H1 (cell line): ENCODE measurements at regions of chr18 and their contacts with region 1.

Region 1: DNA sequence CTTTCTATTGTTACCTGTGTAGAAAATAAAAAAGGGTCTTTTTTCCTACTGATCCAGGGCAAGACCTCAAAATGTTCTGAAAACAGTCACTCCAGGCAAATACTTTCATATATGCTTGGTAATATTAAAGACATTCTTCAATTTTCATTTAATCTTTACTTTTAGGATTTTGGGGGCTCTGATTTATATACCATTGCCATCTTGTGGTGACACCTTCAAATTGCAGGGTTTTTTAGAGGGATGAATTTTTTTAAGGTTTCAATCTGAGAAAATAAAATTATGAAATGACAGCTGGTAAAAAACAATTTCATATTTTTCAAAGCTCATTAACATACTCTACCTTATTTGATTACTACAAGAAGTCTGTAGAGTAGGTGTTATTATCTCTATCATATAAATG is 26.8 kb downstream of the MAPK4 start:
- DNase-seq: no peak
- H3K4me3 ChIP-seq: no peak overlapping the region
- H3K27ac ChIP-seq: no peak overlapping the region
- H3K4me1 ChIP-seq: no peaks in the 10 kb centered on the region
- H3K27me3 ChIP-seq: no peaks in the 10 kb centered on the region; a peak in 2 of 7 replicates
- CTCF ChIP-seq: peak in 2 of 3 experiments; percentile 31 to 47; a peak in 2 of 4 replicates
- EP300 ChIP-seq: no peak
- POLR2A ChIP-seq: no peak
- RAD21 ChIP-seq: peak in 1 of 2 experiments; percentile 57; a peak in 3 of 4 replicates

Region 2: DNA sequence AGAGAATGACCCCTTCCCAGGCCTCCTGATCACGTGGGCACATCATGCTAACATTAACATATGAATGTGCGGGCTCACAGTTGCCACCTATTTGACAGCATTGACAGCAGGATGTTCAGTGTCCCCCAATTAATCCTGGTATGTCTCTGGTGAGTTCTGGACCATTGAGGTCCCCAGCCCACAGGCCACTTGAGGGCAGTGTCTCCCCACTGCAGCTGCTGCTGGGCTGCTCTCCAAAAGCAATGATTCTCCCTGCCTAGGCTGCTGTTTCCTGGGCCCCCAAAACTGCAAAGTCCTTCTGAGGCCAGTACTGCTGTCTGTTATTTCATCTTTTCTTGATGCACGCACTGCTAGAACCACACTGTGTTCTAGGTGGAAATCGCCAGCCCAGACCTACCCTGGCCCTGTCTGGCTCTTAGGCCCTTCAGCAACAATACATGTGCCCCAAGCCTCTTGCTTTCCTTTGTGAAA is 79.6 kb before region 1 on chr18:
- CTCF ChIA-PET with region 1: interaction called, 50 read pairs
- POLR2A ChIA-PET with region 1: no interaction called
- DNase-seq: peak; percentile 29 to 77
- H3K4me3 ChIP-seq: no peak overlapping the region
- H3K27ac ChIP-seq: no peak overlapping the region
- H3K4me1 ChIP-seq: peaks cover 0 to 8% (median 0%) of the 10 kb centered on the region in 4 experiments; a peak in 2 of 7 replicates
- H3K27me3 ChIP-seq: no peaks in the 10 kb centered on the region
- CTCF ChIP-seq: peak; percentile 93 to 96 (median 94)
- EP300 ChIP-seq: no peak
- POLR2A ChIP-seq: no peak
- RAD21 ChIP-seq: peak; percentile 99

Region 3: GRCh38 chr18:50573679-50574078 is 13.0 kb before region 1 on chr18:
- CTCF ChIA-PET with region 1: interaction called, 64 read pairs
- POLR2A ChIA-PET with region 1: no interaction called
- DNase-seq: no peak
- H3K4me3 ChIP-seq: no peak overlapping the region
- H3K27ac ChIP-seq: no peak overlapping the region
- H3K4me1 ChIP-seq: peaks cover 0 to 12% (median 3%) of the 10 kb centered on the region in 4 experiments; a peak in 4 of 7 replicates
- H3K27me3 ChIP-seq: no peaks in the 10 kb centered on the region
- CTCF ChIP-seq: peak in 2 of 3 experiments; percentile 16 to 29; a peak in 2 of 4 replicates
- EP300 ChIP-seq: no peak
- POLR2A ChIP-seq: no peak
- RAD21 ChIP-seq: peak; percentile 10 to 18; a peak in 3 of 4 replicates

Region 4: DNA sequence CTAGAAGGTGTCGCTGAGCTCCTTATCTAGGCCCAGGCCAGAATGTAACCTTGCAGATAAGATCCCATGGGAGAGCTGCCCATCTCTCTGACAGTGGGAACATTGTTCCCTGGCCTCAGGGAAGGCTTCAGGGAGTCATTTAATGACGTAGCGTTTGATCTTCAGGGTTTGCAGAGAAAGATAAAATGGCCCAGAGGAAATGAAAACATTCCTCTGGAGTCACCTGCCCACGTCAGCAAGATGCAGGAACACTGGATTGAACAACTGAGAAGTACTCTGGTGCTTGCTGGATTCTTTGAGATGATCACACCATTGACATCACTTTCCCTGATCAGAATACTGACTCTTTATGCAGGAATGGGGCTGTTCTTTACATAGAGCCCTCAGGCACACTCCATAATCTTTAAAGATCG is 24.8 kb after region 1 on chr18:
- CTCF ChIA-PET with region 1: interaction called, 15 read pairs
- POLR2A ChIA-PET with region 1: no interaction called
- DNase-seq: no peak
- H3K4me3 ChIP-seq: no peak overlapping the region
- H3K27ac ChIP-seq: no peak overlapping the region
- H3K4me1 ChIP-seq: no peaks in the 10 kb centered on the region
- H3K27me3 ChIP-seq: no peaks in the 10 kb centered on the region
- CTCF ChIP-seq: no peak
- EP300 ChIP-seq: no peak
- POLR2A ChIP-seq: no peak
- RAD21 ChIP-seq: no peak